Right ventricle myocardium superior (tissue), 1 donor: ENCODE measurements at regions of chr2 and their contacts with region 1.

Region 1: GRCh38 chr2:96951093-96951654 is 35.2 kb downstream of the FAM178B start:
- DNase-seq: peak; percentile 82
- ATAC-seq: peak; percentile 92

Region 2: GRCh38 chr2:96859338-96859649 is 91.9 kb before region 1 on chr2:
- intact Hi-C with region 1: loop called (anchors 2 kb)
- DNase-seq: peak; percentile 81
- ATAC-seq: no peak

Region 3: DNA sequence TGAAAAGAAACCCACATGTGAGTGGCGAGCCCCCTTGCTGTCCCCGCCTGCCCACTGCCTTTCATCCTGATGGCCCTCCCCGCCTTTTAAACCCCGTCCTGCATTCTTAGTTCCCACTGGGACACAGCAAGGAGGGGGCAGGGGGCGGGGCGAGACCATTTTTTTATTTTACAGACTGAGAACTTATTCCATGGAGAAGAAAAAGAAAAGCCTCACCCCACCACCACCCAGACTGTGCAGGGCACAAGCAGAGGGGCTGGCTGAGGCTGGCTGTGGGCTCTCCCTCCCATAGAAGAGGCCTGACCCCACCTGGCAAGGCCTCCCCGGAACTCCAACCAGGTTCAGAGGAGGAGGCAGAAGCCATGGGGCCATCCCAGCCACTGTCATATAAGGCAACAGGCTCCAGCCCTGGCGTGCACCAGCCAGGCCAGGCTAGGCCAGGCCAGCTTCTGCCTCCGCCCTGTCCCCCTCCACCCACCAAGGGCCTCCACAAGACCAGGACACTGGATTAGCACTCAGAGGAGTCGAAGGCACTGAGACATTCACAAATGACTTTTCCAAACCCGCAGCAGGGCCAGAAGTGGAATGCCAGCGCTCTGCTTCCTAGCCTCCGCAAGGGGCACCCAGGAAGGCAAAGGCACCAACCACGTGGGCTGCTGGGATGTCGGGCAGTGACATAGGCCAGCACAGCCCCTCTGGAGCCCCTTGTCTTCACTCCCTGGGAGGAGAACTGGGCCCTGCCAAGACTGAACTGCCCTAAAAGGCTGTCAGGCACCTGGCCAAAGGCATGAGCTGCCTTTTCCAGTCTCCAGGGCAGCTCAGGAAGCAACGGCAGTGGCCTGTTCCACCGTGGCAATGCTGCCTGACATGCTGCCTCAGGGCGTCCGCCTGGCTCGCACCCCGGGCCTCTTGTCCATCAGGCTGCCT is 43.8 kb before region 1 on chr2:
- intact Hi-C with region 1: loop called (anchors 5 kb)
- DNase-seq: peak; percentile 92
- ATAC-seq: peak; percentile 92